Left cardiac atrium (tissue), 4 donors: ENCODE measurements at regions of chr5 and their contacts with region 1.

Region 1: DNA sequence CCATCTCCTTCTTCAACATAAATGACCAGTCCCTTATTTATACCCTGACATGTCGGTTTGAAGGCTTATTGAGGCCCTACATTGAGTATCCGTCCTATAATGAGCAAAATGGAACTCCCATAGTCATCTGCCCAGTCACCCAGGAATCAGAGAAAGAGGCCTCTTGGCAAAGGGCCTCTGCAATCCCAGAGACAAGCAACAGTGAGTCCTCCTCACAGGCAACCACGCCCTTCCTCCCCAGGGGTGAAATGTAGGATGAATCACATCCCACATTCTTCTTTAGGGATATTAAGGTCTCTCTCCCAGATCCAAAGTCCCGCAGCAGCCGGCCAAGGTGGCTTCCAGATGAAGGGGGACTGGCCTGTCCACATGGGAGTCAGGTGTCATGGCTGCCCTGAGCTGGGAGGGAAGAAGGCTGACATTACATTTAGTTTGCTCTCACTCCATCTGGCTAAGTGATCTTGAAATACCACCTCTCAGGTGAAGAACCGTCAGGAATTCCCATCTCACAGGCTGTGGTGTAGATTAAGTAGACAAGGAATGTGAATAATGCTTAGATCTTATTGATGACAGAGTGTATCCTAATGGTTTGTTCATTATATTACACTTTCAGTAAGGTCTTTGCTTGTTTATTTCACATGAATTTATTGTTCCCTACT is 38.2 kb upstream of the BTNL3 start:
- DNase-seq: no peak
- ATAC-seq: no peak

Region 2: GRCh38 chr5:181024245-181025064 is 74.0 kb after region 1 on chr5:
- intact Hi-C with region 1: no loop called
- DNase-seq: no peak
- ATAC-seq: no peak

Region 3: GRCh38 chr5:181114844-181115778 is 164.7 kb after region 1 on chr5:
- intact Hi-C with region 1: loop called in 1 of 2 experiments (anchors 10 kb)
- DNase-seq: no peak
- ATAC-seq: no peak